Mammary epithelial cell (primary cell): ENCODE measurements at regions of chr12 and their contacts with region 1.

Region 1: GRCh38 chr12:55715833-55716581 is at the start of gene BLOC1S1:
- DNase-seq: peak; percentile 83
- H3K4me3 ChIP-seq: peak within 1 kb of the TSS; percentile 64 to 82 (median 72)
- H3K27ac ChIP-seq: peak within 1 kb of the TSS; percentile 65
- H3K4me1 ChIP-seq: peaks cover 56% of the 10 kb centered on the region
- H3K27me3 ChIP-seq: no peaks in the 10 kb centered on the region
- CTCF ChIP-seq: no peak
- total RNA-seq, gene BLOC1S1: 29.7 to 71.0 TPM

Region 2: DNA sequence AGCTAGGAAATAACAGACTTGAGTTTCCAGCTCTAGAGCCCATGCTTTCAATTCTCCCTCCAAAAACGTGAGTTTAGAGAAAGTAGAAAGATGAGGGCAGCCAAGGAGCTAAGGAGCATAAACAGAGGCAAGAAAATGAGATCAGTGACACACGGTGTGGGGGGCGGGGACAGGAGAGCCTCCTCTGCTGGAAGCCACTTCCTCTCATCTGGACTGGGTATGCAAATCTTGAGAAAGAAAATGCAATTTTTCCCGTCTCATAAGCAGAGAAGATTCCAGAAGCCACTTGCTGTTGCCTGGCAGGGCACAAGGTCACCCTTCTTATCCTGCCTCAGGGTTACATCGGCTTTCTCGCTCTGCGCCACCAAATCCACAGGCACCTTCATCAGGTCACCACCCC is 73.3 kb before region 1 on chr12:
- CTCF ChIA-PET with region 1: no interaction called
- dilution Hi-C with region 1: no loop called
- in situ Hi-C with region 1: no loop called
- intact Hi-C with region 1: loop called (anchors 1 kb)
- DNase-seq: no peak
- H3K4me3 ChIP-seq: no peak overlapping the region
- H3K27ac ChIP-seq: no peak overlapping the region
- H3K4me1 ChIP-seq: no peaks in the 10 kb centered on the region
- H3K27me3 ChIP-seq: no peaks in the 10 kb centered on the region
- CTCF ChIP-seq: no peak

Region 3: DNA sequence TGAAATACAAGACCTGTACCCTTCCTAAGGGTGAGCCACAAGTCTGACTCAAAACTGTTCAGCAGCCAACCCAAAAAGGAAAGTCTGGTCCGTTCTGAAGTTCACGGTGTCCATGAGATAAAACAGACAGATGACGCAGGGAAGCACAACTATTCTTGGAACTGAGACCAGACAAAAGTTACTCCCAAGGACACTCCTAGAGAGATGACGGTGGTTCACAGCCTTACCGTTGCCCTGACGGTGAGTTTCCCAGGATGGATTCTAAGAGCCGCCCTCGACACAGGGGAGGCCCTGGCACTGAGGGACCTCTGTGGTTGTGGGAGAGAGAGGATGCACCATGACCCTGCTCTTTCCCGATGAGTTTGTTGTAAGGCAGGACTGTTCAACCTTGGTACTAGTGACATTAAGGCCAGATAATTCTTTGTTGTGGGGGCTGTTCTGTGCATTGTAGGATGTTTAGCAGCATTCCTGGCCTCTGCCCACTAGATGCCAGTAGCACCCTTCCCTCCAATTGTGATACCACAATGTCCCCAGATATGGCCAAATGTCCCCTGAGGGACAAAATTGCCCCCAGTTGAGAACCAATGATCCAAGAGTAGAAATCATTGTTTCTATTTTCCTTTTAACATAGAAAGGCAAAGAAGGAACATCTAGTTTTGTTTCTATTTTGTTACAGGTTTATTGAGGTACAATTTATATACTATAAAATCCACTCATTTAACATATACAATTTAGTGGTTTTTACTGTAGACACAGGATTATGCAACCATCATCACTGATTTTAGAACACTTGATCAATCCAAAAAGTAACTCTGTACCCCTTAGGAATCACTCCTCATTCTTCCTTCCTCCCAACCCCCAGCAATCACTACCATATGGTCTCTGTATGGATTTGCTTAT is 56.3 kb before region 1 on chr12:
- CTCF ChIA-PET with region 1: interaction called, 7 read pairs
- dilution Hi-C with region 1: no loop called
- in situ Hi-C with region 1: no loop called
- intact Hi-C with region 1: loop called (anchors 1 kb)
- DNase-seq: no peak
- H3K4me3 ChIP-seq: no peak overlapping the region
- H3K27ac ChIP-seq: no peak overlapping the region
- H3K4me1 ChIP-seq: no peaks in the 10 kb centered on the region
- H3K27me3 ChIP-seq: no peaks in the 10 kb centered on the region
- CTCF ChIP-seq: peak; percentile 31 to 40

Region 4: DNA sequence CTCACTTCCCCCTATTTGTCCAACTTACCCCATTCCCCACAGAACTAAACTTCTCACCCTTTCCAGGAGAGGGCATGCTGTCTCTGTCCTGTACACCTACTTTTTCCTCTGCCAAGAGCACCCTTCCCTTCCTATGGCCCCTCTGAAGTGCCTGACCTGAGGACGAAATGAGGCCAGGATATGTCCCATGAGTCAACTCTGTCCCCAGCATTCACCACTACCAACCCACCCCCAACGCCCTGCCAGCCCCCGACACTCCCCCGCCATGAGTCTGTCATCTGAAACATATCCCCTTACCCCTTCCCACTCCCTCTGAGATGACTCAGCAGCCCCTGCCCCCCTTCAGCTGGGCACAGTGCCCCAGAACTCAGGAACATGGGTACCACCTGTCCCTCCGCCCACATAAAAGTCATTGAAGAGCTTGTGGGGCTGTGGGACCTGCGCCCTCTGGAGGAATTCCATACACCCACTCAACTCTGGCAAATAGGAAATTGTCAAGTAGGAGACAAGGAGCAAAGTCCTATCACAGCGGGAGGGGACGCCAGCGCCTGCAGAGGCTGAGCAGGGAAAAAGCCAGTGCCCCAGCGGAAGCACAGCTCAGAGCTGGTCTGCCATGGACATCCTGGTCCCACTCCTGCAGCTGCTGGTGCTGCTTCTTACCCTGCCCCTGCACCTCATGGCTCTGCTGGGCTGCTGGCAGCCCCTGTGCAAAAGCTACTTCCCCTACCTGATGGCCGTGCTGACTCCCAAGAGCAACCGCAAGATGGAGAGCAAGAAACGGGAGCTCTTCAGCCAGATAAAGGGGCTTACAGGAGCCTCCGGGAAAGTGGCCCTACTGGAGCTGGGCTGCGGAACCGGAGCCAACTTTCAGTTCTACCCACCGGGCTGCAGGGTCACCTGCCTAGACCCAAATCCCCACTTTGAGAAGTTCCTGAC is 34.6 kb before region 1 on chr12:
- CTCF ChIA-PET with region 1: interaction called, 4 read pairs
- dilution Hi-C with region 1: loop called (anchors 5 kb)
- in situ Hi-C with region 1: no loop called
- intact Hi-C with region 1: loop called (anchors 1 kb)
- DNase-seq: peak; percentile 43
- H3K4me3 ChIP-seq: peak overlapping the region in 1 of 3 experiments; percentile 25
- H3K27ac ChIP-seq: no peak overlapping the region
- H3K4me1 ChIP-seq: peaks cover 10% of the 10 kb centered on the region
- H3K27me3 ChIP-seq: no peaks in the 10 kb centered on the region
- CTCF ChIP-seq: peak; percentile 24 to 44

Region 5: DNA sequence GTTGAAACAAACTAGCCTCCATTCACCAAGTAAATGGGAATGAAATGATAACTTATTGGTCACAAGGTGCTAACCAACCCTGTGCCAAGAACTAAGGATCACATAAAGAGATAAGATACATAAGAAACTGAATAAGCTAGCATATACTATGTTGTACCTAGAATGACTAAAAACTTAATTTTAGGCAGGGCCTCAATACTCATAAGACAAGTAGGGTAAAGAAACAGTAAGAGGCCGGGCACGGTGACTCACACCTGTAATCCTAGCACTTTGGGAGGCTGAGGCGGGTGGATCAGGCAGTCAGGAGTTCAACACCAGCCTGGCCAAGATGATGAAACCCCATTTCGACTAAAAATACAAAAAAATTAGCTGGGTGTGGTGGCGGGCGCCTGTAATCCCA is 44.7 kb after region 1 on chr12:
- CTCF ChIA-PET with region 1: no interaction called
- dilution Hi-C with region 1: no loop called
- in situ Hi-C with region 1: no loop called
- intact Hi-C with region 1: no loop called
- DNase-seq: no peak
- H3K4me3 ChIP-seq: no peak overlapping the region
- H3K27ac ChIP-seq: no peak overlapping the region
- H3K4me1 ChIP-seq: no peaks in the 10 kb centered on the region
- H3K27me3 ChIP-seq: no peaks in the 10 kb centered on the region
- CTCF ChIP-seq: no peak